ENCODE measurements at regions of chr20 and their contacts with region 1.

Region 1: GRCh38 chr20:58907399-58908137 is 55.1 kb downstream of the GNAS start:
- DNase-seq: peak; percentile 84
- ATAC-seq: peak; percentile 96

Region 2: DNA sequence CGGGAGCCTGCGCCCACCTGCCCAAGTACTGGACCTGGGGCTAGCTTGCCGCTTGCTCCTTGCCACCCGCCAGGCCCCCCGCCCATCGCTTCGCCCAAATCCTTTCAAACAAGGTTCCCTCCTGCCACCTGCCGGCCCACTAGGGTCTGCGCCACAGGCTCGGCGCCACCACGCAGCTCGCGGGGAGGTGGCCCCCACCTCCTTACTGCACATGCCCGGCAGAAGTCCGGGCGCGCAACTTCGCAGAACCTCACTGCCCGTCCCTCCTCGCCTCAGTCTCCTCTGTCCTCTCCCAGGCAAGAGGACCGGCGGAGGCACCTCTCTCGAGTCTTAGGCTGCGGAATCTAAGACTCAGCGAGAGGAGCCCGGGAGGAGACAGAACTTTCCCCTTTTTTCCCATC is 68.1 kb before region 1 on chr20:
- intact Hi-C with region 1: no loop called
- DNase-seq: peak; percentile 65
- ATAC-seq: peak; percentile 77

Region 3: GRCh38 chr20:59032023-59032712 is 124.6 kb after region 1 on chr20 and contains the start of gene ATP5F1E:
- intact Hi-C with region 1: loop called (anchors 5 kb)
- DNase-seq: peak; percentile 99
- ATAC-seq: peak; percentile 100
- total RNA-seq, gene ATP5F1E: 128 TPM

Region 4: GRCh38 chr20:59351414-59352040 is 444.0 kb after region 1 on chr20:
- intact Hi-C with region 1: no loop called
- DNase-seq: no peak
- ATAC-seq: no peak

Measured in left ventricle myocardium superior (tissue), 1 donor.